ENCODE measurements at regions of chr4 and their contacts with region 1.

Region 1: DNA sequence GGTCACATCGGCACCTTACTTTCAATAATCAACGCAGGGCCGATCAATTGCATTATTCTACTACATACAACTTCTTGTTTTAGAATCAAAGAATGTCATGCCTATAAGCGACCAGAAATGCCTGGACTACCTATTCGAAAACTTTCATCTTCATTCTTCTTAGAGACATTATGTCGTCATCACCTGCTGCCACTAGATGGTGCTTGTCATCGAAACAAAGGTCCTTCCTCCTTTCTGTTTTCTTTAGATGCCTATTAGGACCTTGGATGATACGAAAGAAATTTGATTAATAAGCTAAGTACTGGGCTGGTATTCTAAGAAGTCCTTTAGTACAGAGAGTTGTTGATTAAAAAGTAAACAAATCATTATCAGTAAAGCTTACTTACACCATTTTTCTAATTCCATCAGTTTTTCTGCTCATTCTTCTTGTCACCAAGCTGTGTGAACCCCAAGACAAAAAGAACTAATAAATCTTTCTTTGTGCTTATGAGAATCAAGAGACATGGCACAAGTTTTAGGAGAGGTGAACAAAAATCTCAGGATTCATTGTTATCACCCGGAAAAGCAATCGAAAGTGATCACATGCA is 154.5 kb upstream of the SLC4A4 start:
- DNase-seq: peak; percentile 26
- H3K4me3 Mint-ChIP-seq: no peak overlapping the region
- H3K27ac Mint-ChIP-seq: no peak overlapping the region
- H3K4me1 Mint-ChIP-seq: no peaks in the 10 kb centered on the region
- H3K27me3 Mint-ChIP-seq: no peaks in the 10 kb centered on the region
- CTCF ChIP-seq: peak; percentile 16

Region 2: GRCh38 chr4:71050809-71051208 is 133.5 kb before region 1 on chr4:
- CTCF ChIA-PET with region 1: interaction called, 3 read pairs
- intact Hi-C with region 1: loop called (anchors 5 kb)
- DNase-seq: no peak
- H3K4me3 Mint-ChIP-seq: no peak overlapping the region
- H3K27ac Mint-ChIP-seq: no peak overlapping the region
- H3K4me1 Mint-ChIP-seq: no peaks in the 10 kb centered on the region
- H3K27me3 Mint-ChIP-seq: no peaks in the 10 kb centered on the region
- CTCF ChIP-seq: no peak

Region 3: DNA sequence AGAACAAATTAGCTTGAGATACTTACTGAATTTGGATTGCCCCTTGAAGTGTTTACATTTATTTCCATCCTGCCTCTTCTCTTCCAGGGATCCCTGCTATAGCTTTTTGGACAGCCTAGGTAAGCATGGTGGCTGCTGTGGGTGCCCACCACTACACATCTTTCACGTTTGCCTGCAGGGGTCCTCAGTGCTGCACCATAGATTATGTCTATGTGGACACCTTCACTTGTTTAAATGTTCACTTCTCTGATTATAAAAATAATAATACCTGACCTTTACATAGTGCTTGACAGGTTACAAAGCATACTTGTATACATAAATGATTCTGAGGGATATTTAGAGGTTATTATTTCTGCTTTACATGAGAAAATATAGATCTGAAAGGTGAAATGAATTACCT is 86.6 kb after region 1 on chr4:
- CTCF ChIA-PET with region 1: interaction called, 5 read pairs
- intact Hi-C with region 1: loop called (anchors 10 kb)
- DNase-seq: peak; percentile 63
- H3K4me3 Mint-ChIP-seq: no peak overlapping the region
- H3K27ac Mint-ChIP-seq: no peak overlapping the region
- H3K4me1 Mint-ChIP-seq: peaks cover 17% of the 10 kb centered on the region
- H3K27me3 Mint-ChIP-seq: no peaks in the 10 kb centered on the region
- CTCF ChIP-seq: peak; percentile 40

Measured in Calu3 (cell line).